Calu3 (cell line): ENCODE measurements at regions of chr3 and their contacts with region 1.

Region 1: GRCh38 chr3:121942116-121942788 is 48.1 kb downstream of the SLC15A2 start:
- DNase-seq: peak; percentile 35
- H3K4me3 Mint-ChIP-seq: no peak overlapping the region
- H3K27ac Mint-ChIP-seq: peak overlapping the region; percentile 72
- H3K4me1 Mint-ChIP-seq: peaks cover 22% of the 10 kb centered on the region
- H3K27me3 Mint-ChIP-seq: no peaks in the 10 kb centered on the region
- CTCF ChIP-seq: no peak

Region 2: GRCh38 chr3:121883507-121883906 is 58.7 kb before region 1 on chr3:
- CTCF ChIA-PET with region 1: no interaction called
- intact Hi-C with region 1: loop called (anchors 10 kb)
- DNase-seq: peak; percentile 44
- H3K4me3 Mint-ChIP-seq: no peak overlapping the region
- H3K27ac Mint-ChIP-seq: no peak overlapping the region
- H3K4me1 Mint-ChIP-seq: peaks cover 12% of the 10 kb centered on the region
- H3K27me3 Mint-ChIP-seq: no peaks in the 10 kb centered on the region
- CTCF ChIP-seq: peak; percentile 43

Region 3: DNA sequence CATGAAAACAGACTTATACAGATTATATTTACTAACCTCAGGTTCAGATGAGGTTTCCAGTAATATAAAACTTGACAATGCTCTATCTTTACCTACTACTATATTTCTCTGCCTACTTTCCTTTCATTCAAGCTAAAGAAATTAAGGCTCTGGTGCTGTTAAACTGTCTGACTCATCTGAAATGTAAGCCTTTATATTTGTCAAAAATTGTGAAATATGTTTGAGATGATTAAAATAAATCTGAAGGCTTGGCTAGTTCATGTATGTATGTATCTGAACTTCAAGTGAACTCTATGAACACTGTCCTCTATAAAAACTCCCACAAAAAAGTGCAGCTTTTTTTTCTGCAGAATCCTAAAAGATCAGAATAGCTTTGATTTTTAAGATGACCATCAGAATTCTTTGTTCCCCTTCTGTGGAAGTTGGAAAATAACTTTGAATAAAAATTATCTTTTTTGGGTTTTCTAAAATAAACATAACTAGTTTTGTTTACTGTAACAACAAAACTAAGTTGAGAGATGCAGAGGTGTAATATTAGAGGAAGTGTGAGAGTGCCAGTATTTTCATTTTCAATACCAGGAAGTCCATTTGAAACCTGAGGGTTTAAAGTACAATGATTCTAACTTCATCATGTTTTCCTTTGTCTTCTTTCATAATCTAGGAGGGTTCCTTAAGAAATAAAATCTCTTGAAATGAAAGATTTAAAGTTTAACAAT is 37.6 kb after region 1 on chr3:
- CTCF ChIA-PET with region 1: no interaction called
- intact Hi-C with region 1: loop called (anchors 2 kb)
- DNase-seq: no peak
- H3K4me3 Mint-ChIP-seq: peak overlapping the region; percentile 4
- H3K27ac Mint-ChIP-seq: peak overlapping the region; percentile 66
- H3K4me1 Mint-ChIP-seq: peaks cover 12% of the 10 kb centered on the region
- H3K27me3 Mint-ChIP-seq: no peaks in the 10 kb centered on the region
- CTCF ChIP-seq: no peak

Region 4: DNA sequence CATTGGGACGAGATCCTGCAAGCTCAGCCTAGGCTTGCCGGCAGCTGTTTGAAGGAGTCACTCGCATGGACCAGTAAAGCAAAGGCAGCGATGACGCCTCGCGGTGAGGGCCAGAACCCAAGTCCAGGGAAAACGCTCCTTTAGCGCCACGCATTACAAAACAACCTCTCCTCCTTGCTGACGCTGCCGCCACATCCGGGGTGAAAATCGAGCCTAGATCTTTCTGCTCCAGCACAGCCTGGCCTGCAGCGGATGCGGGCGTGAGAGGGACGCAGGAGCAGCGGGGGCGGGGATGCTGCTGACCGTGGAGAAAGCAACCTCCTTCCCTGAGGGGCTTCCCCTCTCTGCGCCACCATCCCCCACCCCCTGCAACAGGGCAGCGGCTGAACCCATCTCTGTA is 287.9 kb after region 1 on chr3:
- CTCF ChIA-PET with region 1: no interaction called
- intact Hi-C with region 1: no loop called
- DNase-seq: no peak
- H3K4me3 Mint-ChIP-seq: no peak overlapping the region
- H3K27ac Mint-ChIP-seq: no peak overlapping the region
- H3K4me1 Mint-ChIP-seq: no peaks in the 10 kb centered on the region
- H3K27me3 Mint-ChIP-seq: no peaks in the 10 kb centered on the region
- CTCF ChIP-seq: no peak